Right cardiac atrium (tissue), 5 donors: ENCODE measurements at regions of chr20 and their contacts with region 1.

Region 1: GRCh38 chr20:53738039-53738944 is 144.7 kb upstream of the ZNF217 start:
- DNase-seq: peak; percentile 63 to 83 (median 80)
- ATAC-seq: peak; percentile 86 to 88
- H3K4me3 ChIP-seq: peak overlapping the region; percentile 21
- H3K27ac ChIP-seq: peak overlapping the region; percentile 70
- H3K4me1 ChIP-seq: peaks cover 5% of the 10 kb centered on the region
- H3K27me3 ChIP-seq: no peaks in the 10 kb centered on the region

Region 2: GRCh38 chr20:53370345-53370961 is 367.8 kb before region 1 on chr20:
- intact Hi-C with region 1: no loop called
- DNase-seq: no peak
- ATAC-seq: no peak
- H3K4me3 ChIP-seq: no peak overlapping the region
- H3K27ac ChIP-seq: no peak overlapping the region
- H3K4me1 ChIP-seq: no peaks in the 10 kb centered on the region
- H3K27me3 ChIP-seq: no peaks in the 10 kb centered on the region

Region 3: DNA sequence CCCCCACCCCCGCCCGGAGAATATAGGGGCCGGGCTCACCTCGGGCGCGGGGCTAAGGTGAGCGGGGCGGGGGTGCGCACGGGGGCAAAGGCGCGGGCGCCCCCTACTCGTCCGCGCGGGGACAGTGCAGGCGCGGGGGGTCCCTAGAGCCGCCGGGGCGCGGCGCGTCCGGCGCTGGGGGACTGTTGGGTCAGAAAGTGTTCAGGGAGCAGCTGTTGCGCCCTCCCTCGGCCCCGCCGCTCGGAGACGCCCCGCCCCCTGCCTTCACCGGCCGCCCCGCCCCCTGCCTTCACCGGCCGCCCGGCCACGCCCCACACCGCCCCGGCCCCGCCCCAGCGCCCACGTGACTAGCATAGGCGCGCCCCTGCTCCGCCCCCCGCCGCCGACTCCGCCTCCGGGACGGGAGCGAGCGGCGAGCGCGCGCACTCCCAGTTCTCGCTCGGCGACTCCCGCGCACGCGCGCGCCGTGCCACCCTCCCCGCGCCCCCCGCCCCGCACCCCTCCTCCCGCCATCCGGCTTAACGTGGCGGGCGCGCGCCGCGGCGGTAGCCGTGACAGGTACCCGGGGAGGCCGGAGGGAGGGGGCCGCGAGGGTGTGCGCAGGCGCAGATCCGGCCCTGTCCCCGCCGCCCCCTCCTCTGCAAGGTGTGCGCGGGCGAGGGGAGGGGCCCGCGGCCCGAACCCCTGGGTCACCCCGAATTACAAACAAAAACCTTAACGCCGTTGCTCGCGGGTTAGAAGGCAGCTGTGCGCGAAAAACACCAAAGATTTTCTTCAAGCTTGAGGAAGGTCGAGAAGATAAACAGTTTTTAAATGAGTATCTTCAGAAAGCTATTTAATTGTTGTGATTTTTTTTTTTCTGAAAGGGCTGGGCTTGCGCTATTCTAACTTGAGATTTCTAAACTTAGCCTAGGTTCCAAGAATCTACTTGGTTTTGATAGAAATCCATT is 143.9 kb before region 1 on chr20:
- intact Hi-C with region 1: loop called in 1 of 4 experiments (anchors 10 kb)
- DNase-seq: peak; percentile 97 to 99 (median 99)
- ATAC-seq: peak; percentile 92 to 95
- H3K4me3 ChIP-seq: peak overlapping the region; percentile 99
- H3K27ac ChIP-seq: peak overlapping the region; percentile 96
- H3K4me1 ChIP-seq: no peaks in the 10 kb centered on the region
- H3K27me3 ChIP-seq: no peaks in the 10 kb centered on the region

Region 4: GRCh38 chr20:53623454-53624211 is 114.7 kb before region 1 on chr20:
- intact Hi-C with region 1: loop called in 1 of 4 experiments (anchors 5 kb)
- DNase-seq: peak; percentile 66 to 86 (median 80)
- ATAC-seq: peak; percentile 91
- H3K4me3 ChIP-seq: peak overlapping the region; percentile 66
- H3K27ac ChIP-seq: peak overlapping the region; percentile 92
- H3K4me1 ChIP-seq: peaks cover 8% of the 10 kb centered on the region
- H3K27me3 ChIP-seq: no peaks in the 10 kb centered on the region

Region 5: DNA sequence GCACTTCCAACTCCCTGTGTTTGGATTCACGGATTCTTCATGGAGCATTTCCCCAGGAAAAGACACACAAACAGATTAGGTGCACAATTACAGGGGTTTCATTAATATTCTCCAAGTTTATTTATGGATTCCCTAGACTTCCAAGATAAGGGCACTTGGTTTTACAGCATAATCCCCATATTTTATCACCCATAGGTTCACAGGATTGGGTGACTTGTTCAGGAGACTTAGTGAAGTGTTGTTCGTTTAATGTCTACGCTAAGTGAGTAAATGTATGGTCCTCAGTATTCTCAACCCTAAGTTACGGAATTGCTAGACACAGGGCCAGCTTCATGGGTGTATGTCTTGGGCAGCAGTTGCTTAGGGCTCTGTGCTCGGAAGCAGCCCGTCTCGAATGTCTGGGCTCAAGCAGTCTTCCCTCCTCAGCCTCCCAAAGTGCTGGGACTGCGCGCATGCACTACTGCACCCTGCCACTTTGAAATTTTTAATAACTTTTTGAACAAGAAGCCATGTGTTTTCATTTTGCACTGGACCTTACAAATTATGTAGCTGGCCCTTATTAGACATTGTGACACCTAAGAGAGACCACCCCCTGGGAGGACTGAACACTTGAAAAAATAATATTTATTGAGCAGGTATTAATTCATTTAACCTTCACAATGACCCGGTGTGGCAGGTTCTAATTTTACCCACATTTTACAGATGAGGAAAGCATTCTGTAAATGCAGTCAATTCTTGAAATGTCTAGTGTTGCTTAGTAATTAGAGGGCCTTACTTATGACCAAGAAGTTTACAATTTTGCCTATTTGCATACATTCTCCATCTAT is 53.1 kb before region 1 on chr20:
- intact Hi-C with region 1: no loop called
- DNase-seq: no peak
- ATAC-seq: no peak
- H3K4me3 ChIP-seq: no peak overlapping the region
- H3K27ac ChIP-seq: no peak overlapping the region
- H3K4me1 ChIP-seq: no peaks in the 10 kb centered on the region
- H3K27me3 ChIP-seq: no peaks in the 10 kb centered on the region

Region 6: GRCh38 chr20:53869466-53870258 is 131.4 kb after region 1 on chr20:
- intact Hi-C with region 1: loop called in 1 of 4 experiments (anchors 10 kb)
- DNase-seq: peak in 2 of 3 donors; percentile 30 to 56
- ATAC-seq: peak; percentile 83 to 89
- H3K4me3 ChIP-seq: no peak overlapping the region
- H3K27ac ChIP-seq: no peak overlapping the region
- H3K4me1 ChIP-seq: peaks cover 2% of the 10 kb centered on the region
- H3K27me3 ChIP-seq: no peaks in the 10 kb centered on the region

Region 7: DNA sequence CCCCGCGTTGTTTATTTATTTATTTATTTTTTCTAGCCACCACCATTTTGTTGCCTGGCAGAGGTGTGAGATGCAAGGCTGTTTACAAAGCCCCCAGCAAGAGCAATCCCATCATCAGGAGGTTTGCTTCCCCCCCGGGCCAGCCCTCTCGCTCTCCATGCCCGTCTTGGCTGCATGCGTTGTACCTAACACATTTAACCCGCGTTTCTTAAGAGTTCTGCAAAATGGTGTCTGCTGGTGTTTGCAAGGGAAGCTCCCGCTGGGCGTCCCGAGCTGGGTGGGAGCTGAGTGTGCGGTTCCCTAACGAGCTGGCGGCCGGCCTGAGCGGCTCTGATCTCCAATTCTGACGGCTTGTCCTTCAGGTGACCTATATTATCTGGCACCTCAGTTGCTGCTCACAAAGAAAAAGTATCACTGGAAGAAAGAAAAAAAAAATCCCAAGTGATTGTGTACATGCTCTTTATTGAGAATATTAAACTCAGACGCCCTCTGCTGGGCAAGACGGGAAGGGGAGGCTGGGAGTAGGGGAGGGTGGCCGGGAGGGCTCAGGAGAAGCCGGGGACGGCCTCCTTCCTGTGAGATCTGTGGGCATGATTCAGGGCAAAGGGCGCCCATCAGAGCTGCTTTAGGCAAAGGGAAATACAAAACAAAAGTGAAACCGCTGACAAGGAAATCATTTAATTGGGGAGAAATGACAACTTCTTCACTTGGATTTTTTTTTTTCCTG is 177.3 kb after region 1 on chr20:
- intact Hi-C with region 1: loop called in 1 of 4 experiments (anchors 10 kb)
- DNase-seq: peak; percentile 93 to 99 (median 97)
- ATAC-seq: peak; percentile 92 to 93
- H3K4me3 ChIP-seq: peak overlapping the region; percentile 60
- H3K27ac ChIP-seq: peak overlapping the region; percentile 96
- H3K4me1 ChIP-seq: peaks cover 9% of the 10 kb centered on the region
- H3K27me3 ChIP-seq: no peaks in the 10 kb centered on the region